ENCODE measurements at regions of chr4 and their contacts with region 1.

Region 1: DNA sequence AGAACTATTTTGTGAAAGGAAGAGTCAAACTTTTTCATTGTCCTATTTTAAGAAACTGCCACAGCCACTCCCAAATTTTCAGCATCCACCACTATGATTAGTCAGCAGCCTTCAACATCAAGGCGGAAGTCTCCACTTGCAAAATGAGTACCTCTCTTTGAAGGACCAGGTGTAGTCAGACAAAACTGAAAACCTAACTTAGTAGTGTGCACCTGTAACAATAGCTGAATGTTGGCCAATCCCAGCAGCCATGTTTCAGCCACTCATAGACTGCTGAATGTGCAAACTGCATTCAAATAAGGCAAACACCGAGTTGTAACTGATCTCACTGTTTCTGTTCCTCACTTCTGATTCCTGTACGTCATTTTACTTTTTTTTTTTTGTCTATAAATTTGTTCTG is 341.1 kb downstream of the IL15 start:
- DNase-seq: no peak
- ATAC-seq: no peak; the same call in 2 of the 3 replicates
- H3K4me3 ChIP-seq: no peak overlapping the region
- H3K27ac ChIP-seq: no peak overlapping the region
- H3K4me1 ChIP-seq: no peaks in the 10 kb centered on the region
- H3K27me3 ChIP-seq: no peaks in the 10 kb centered on the region
- CTCF ChIP-seq: no peak
- EP300 ChIP-seq: no peak
- POLR2A ChIP-seq: no peak
- RAD21 ChIP-seq: no peak

Region 2: DNA sequence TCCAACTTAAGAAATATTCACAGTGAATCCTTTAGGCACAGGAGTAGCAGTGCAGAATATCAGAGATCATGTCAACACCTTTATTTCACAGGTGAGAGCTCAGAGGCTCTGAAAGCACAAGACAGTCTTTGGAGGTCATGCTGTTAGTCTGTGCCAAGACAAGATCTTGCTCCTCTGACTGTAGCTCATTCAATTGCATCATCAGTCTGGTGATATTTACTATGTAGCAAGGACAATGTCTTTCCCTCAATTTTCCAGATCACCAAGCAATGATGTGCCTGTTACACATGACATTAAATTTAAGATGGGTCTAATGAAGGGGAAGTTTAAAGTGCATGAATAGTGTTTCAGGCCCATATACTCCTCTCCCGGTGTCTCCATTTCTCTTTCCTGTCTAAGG is 63.5 kb before region 1 on chr4:
- CTCF ChIA-PET with region 1: no interaction called
- POLR2A ChIA-PET with region 1: no interaction called
- in situ Hi-C with region 1: no loop called
- intact Hi-C with region 1: loop called (anchors 2 kb)
- DNase-seq: peak in 1 of 4 experiments; percentile 26
- ATAC-seq: peak; percentile 75
- H3K4me3 ChIP-seq: no peak overlapping the region
- H3K27ac ChIP-seq: peak overlapping the region; percentile 35; the same call in 1 of the 3 replicates
- H3K4me1 ChIP-seq: peaks cover 0 to 4% of the 10 kb centered on the region in 2 experiments; a peak in 2 of 5 replicates
- H3K27me3 ChIP-seq: no peaks in the 10 kb centered on the region
- CTCF ChIP-seq: no peak
- EP300 ChIP-seq: no peak
- POLR2A ChIP-seq: no peak
- RAD21 ChIP-seq: no peak

Measured in K562 (cell line).